Left cardiac atrium (tissue), 4 donors: ENCODE measurements at regions of chr18 and their contacts with region 1.

Region 1: GRCh38 chr18:59402432-59403090 is 43.5 kb upstream of the LMAN1 start:
- DNase-seq: peak; percentile 65
- ATAC-seq: peak; percentile 92

Region 2: DNA sequence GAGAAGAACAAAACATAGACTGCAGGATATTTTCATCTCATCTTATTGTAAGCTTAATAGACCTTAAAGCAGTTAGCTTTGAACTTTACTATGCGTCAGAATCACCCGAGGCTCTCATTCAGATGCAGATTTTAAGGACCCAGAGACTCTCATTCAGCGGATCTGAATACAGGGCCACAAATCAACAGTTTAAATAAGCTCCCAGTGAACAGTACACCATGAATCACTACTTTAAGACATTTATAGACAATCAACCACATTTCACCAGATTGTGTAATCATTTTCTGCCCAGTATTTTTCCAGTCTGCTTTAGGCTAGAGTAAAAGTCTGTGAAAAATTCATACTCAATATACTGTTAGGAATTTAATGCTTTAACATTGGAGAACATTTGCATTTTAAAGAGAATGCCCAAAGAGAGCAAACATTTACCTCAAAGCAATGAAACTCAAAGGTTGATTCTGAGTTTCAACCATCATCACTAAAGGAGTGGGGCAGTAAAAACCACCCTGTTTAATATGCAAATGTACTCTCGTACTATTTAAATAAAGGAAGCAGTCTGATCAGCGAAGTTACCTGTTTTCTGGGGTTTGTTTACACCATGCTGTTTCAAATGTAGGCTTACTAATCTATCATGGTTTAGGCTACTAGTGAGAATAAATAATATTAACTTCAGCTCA is 762.7 kb before region 1 on chr18:
- intact Hi-C with region 1: no loop called
- DNase-seq: no peak
- ATAC-seq: peak in 1 of 2 donors; percentile 48

Region 3: GRCh38 chr18:59249205-59249774 is 153.3 kb before region 1 on chr18:
- intact Hi-C with region 1: loop called (anchors 5 kb)
- DNase-seq: no peak
- ATAC-seq: peak; percentile 79 to 85

Region 4: DNA sequence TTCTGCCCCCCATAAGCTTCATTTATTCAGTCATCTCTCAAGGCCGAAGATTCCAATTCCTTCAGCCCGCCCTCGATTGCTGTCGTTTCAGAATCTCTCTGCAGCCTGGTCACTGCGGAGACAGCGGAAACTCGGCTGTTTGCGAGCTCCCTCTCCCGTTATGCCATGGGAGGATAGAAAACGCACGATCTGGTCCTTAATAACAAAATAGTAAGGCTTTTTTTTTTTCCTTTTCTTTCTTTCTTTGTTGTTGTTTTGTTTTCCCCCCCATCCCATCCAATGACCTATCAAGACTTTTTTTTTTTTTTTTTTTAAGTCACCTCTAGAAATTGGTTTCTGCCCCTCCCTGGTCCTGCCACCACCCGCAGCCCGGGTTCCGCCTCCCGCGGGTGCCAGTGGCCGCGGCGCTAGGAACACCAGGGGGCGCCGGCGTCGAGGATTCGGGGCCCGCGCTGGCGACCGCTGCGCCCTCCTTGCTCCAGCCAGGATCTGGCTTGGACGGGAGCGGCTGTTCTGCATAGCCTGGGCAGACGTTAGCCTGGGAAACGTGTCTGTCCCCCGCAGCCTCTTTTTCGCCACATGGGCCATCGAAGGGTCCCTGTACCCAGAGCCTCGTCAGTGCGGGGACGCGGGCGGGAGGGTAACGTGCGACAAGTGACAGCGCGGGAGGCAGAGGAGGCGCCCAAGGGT is 94.2 kb before region 1 on chr18:
- intact Hi-C with region 1: loop called (anchors 2 to 5 kb)
- DNase-seq: peak; percentile 83
- ATAC-seq: peak; percentile 97 to 98